ENCODE measurements at regions of chrX and their contacts with region 1.

Region 1: DNA sequence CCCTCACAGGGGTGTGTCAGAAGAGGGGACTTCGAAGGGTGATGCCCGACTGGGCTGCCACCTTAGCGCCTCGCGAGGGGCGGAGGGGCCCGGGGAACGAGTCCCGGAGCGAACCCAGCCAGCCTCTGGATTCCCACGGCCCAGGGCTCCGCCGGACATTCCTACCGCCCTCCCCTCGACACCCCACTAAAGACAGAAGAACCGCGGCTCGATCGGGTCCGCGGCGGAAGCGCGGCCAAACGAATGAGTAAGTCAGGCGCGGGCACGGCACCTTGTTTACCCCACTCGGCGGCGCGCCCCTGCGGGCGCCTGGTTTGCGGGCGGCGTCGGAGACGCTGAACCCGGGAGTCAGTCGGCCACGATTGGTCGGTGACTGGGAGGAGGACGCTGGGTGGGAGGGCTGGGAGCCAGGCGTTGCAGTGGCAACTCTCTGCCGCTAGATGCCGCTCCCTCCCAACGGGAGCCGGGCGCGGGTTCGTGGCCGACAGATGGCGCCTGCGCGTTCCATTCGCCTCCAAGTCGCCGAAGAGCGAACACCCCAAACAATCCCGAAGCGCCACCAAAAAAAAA is 1.4 kb upstream of the STAG2 start:
- DNase-seq: peak; percentile 72 to 89 (median 86)
- H3K4me3 ChIP-seq: peak overlapping the region; percentile 48 to 84 (median 70)
- H3K27ac ChIP-seq: peak overlapping the region; percentile 75 to 100 (median 99)
- H3K27me3 ChIP-seq: peaks cover 0 to 14% (median 0%) of the 10 kb centered on the region in 45 donors
- CTCF ChIP-seq: peak; percentile 56 to 94 (median 80)

Region 2: DNA sequence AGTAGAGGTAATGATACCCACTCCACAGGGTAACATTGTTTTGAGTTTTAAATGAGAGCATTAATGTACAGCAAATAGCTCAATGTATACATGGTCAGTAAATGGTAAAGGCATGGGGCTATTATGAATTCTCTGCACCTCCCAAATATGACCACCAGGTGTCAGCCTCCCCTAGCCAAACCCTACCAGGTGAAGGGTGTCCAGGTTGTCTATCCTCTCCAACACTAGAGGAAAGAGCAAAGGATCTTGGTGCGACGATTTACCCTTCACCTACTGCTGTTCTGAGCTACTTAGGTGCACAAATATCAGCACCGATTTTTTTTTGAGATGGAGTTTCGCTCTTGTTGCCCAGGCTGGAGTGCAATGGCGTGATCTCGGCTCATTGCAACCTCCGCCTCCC is 126.7 kb before region 1 on chrX:
- intact Hi-C with region 1: loop called in 1 of 2 experiments (anchors 10 kb)
- DNase-seq: peak in 3 of 10 donors; percentile 31 to 42 (median 37)
- H3K4me3 ChIP-seq: no peak overlapping the region
- H3K27ac ChIP-seq: no peak overlapping the region
- H3K27me3 ChIP-seq: peaks cover 0 to 31% (median 6%) of the 10 kb centered on the region in 45 donors
- CTCF ChIP-seq: peak; percentile 54 to 81 (median 70)

Region 3: DNA sequence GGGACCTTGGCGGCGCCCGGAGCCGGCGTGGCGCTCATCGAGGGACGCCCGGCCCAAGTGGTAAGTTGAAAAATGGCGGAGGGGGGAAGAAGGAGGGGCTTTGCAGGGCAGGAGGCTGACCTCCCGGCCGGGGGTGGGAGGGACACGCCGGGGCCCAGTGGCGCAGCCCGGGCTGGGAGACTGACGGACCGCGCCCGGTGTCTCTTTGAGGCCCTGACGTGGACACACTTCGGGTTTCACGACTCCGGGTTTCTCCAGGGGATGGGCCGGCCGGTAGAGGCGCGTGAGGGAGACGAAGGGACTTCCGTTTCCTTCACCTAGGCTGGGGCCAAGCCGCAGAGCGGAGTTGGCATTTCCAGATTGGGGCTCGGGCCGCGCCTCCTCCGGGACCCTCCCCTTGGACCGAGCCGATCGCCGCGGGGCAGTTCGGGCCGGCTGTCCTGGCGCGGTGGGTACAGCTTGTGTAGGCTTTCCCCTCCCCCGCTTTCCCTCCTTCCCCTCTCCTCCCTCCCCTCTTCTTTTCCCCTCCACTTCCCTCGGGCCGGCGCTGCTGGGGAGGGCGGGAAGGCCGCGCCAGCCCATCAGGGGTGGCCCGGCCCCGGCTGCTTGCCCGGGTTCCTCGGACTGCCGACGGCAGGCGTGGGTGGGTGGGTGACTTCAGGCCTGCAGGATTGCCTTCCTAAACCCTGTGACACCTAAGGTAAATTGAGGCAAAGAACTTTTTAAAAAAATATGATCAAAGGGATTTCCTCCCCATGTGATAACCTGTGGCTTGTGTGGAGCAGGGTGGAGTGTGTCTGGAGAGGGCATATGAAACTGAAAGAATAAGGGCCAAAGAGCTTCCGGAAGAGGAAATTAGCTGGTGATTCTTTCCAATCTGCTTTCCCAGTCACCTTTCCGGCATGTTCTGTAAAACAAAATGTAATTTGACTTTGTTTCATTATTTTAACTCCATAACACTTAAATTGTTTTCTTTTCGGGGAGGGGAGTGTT is 100.0 kb before region 1 on chrX and contains the start of gene XIAP:
- intact Hi-C with region 1: loop called in 1 of 2 experiments (anchors 10 kb)
- DNase-seq: peak; percentile 52 to 80 (median 63)
- H3K4me3 ChIP-seq: peak within 1 kb of the TSS; percentile 38 to 80 (median 69)
- H3K27ac ChIP-seq: peak within 1 kb of the TSS; percentile 61 to 98 (median 94)
- H3K27me3 ChIP-seq: peaks cover 0 to 35% (median 0%) of the 10 kb centered on the region in 45 donors
- CTCF ChIP-seq: no peak
- total RNA-seq, gene XIAP: 35.8 to 82.2 (median 55.8) TPM

Region 4: DNA sequence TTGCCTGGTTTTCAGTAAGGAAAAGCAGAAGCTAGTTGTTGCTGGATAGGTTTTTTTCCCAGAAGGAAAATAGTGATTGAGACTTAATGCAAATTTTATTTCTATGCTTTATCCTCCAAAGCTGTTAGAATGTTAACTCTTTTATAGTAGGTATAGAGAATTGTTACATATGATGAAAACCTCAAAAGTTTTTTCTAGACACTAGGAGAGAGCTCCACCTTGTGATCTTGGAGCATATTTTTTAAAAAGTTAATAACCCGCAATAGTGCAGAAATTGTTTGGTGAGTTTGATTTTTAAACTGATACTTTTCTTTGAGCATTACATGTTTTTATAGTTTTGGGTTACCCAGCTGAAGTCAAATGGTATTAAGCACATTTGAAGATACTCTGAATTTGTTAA is 57.9 kb after region 1 on chrX:
- intact Hi-C with region 1: loop called in 1 of 2 experiments (anchors 5 kb)
- DNase-seq: no peak
- H3K4me3 ChIP-seq: no peak overlapping the region
- H3K27ac ChIP-seq: no peak overlapping the region
- H3K27me3 ChIP-seq: peaks cover 0 to 19% (median 0%) of the 10 kb centered on the region in 45 donors
- CTCF ChIP-seq: peak in 10 of 56 donors; percentile 5 to 33 (median 23)